Gastrocnemius medialis (tissue), 4 donors: ENCODE measurements at regions of chr3 and their contacts with region 1.

Region 1: GRCh38 chr3:15585111-15585845 is 16.1 kb downstream of the HACL1 start:
- DNase-seq: no peak
- ATAC-seq: no peak
- H3K4me3 ChIP-seq: no peak overlapping the region
- H3K27ac ChIP-seq: no peak overlapping the region
- H3K4me1 ChIP-seq: no peaks in the 10 kb centered on the region
- H3K27me3 ChIP-seq: no peaks in the 10 kb centered on the region
- CTCF ChIP-seq: no peak
- POLR2A ChIP-seq: no peak

Region 2: GRCh38 chr3:14660907-14661306 is 924.4 kb before region 1 on chr3:
- in situ Hi-C with region 1: no loop called
- intact Hi-C with region 1: loop called (anchors 10 kb)
- DNase-seq: no peak
- ATAC-seq: no peak
- H3K4me3 ChIP-seq: no peak overlapping the region
- H3K27ac ChIP-seq: no peak overlapping the region
- H3K4me1 ChIP-seq: no peaks in the 10 kb centered on the region
- H3K27me3 ChIP-seq: no peaks in the 10 kb centered on the region
- CTCF ChIP-seq: no peak
- POLR2A ChIP-seq: no peak

Region 3: DNA sequence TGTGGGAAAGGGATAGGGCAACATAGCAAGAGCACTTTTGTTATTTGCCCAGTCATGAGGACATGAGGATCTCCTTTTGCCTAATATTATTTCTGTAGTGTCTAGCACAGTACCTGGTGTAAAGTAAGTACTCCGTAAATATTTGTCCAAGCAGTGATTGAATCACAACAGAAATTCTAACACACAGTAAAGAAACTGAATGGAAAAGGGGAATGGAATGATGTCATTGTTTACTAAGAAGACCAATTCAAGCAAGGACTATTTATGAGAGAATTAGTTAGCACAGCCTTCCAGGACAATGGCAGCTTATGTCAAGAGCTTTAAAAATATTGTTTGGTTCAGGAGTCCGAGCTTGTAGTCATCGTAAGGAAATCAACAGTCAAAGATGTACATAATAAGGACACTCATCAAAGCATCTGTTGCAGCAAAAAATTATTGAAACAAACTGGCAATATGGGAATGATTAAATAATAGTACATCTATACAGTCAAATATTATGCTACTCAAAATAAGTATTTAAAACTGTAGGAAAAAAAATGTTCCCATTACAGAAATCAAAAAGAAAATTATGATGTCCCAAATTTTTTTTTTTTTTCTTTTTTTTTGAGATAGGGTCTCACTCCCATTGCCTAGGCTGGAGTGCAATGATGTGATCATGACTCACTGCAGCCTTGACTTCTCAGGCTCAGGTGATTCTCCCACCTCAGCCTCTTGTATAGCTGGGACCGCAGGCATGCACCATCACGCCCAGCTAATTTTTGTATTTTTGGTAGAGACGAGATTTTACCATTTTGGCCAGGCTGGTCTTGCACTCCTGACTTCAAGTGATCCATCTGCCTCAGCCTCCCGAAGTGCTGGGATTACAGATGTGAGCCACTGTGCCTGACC is 361.3 kb before region 1 on chr3:
- in situ Hi-C with region 1: no loop called
- intact Hi-C with region 1: loop called (anchors 10 kb)
- DNase-seq: no peak
- ATAC-seq: no peak
- H3K4me3 ChIP-seq: no peak overlapping the region
- H3K27ac ChIP-seq: no peak overlapping the region
- H3K4me1 ChIP-seq: peaks cover 11 to 22% of the 10 kb centered on the region in 2 donors
- H3K27me3 ChIP-seq: no peaks in the 10 kb centered on the region
- CTCF ChIP-seq: no peak
- POLR2A ChIP-seq: no peak